ENCODE measurements at regions of chr16 and their contacts with region 1.

Region 1: DNA sequence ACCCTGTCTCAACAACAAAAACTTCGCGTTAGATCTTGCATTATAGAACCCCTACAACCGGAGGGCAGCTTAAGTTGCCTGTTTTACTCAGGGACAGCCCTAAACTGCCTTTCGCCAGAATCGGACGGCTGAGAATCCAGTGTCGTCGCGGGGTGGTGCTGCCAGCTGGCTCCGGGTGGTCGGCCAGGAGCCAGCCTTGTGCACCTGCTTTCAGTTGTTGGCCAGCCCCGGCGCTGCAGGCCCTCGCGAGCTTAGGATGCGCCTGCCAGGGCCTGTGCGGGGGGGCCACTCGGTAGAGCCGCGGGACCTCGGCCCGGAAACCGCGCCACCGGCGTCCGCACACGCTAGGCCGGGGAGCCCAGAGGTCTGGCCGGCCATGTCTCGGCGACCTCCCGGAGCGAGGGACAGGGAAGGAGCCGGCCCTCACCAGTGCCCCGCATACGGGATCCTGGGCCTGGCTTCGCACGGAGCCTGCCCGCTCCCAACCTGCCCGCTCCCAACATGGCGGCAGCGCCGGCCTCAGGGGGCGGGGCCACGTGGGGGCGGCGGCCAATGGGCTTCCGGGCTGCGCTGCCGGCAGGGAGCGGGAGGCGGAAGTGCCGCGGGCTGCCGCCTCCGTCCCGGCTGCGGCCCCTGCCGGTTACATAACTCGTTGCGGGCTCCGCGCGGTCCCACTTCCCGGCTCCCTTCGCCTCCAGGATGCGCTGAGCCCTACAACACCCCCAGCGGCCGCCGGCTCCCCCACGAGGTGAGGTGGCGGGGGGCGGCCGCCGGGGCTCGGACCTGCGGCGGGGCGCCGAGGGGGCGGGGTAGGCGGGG is 14.2 kb downstream of the NAA60 start:
- H3K4me3 ChIP-seq: peak overlapping the region; percentile 83
- H3K27ac ChIP-seq: peak overlapping the region; percentile 93
- H3K4me1 ChIP-seq: peaks cover 10% of the 10 kb centered on the region
- CTCF ChIP-seq: peak; percentile 28; the same call in 1 of the 2 replicates

Region 2: GRCh38 chr16:3443108-3444031 is 14.3 kb before region 1 on chr16 and contains the starts of genes NAA60 and ZNF597:
- CTCF ChIA-PET with region 1: interaction called, 3 read pairs
- POLR2A ChIA-PET with region 1: interaction called, 18 read pairs
- H3K4me3 ChIP-seq: peak within 1 kb of the TSS; percentile 61
- H3K27ac ChIP-seq: peak within 1 kb of the TSS; percentile 32; the same call in 1 of the 2 replicates
- H3K4me1 ChIP-seq: no peaks in the 10 kb centered on the region
- CTCF ChIP-seq: no peak; the same call in 1 of the 2 replicates

Region 3: DNA sequence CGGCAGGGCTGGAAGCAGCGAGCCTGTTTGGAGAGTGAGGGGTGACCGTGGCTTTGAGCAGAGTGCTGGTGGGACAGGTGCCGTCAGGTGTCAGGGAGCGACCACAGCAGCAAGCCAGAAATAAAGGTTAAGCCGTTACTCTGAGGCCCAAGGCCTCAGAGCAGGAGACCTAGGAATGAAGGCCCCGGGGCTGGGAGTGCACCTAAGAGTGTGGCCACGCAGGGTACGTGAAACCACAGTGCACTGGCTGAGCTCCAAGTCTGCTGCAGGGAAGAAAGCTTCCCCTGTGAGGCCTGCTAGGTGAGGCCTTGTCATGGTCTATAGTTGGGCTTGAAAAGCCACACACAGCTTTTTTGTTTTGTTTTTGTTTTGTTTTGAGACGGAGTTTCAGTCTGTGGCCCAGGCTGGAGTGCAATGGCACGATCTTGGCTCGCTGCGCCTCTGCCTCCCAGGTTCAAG is 51.9 kb after region 1 on chr16:
- CTCF ChIA-PET with region 1: no interaction called
- POLR2A ChIA-PET with region 1: no interaction called
- H3K4me3 ChIP-seq: no peak overlapping the region
- H3K27ac ChIP-seq: 0 out of 2 replicates have a peak overlapping the region, but pooled peaks have one; percentile 31
- H3K4me1 ChIP-seq: peaks cover 3% of the 10 kb centered on the region; the same call in 1 of the 2 replicates
- CTCF ChIP-seq: no peak

Region 4: DNA sequence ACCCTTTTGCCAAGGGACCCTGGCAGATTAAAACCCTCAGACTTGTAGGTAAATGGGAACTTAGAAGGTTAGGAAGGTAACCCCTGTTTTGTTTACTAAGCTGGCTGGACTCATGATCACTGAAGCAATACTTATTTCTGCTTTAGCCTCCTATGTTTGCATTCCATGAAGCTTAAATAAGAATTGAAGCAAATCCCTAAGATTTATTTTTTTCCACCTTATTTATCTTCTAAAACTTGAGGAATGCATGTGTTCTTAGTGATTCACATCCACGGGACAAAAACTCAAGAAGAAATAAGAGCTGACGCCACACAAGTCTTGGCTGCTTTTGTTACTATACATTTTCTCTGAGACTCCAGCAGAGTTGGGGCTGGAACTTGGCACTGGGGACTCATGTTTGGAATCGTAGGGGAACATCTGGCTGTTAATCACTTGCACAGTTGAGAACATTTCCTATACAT is 78.7 kb after region 1 on chr16:
- CTCF ChIA-PET with region 1: no interaction called
- POLR2A ChIA-PET with region 1: no interaction called
- H3K4me3 ChIP-seq: no peak overlapping the region
- H3K27ac ChIP-seq: no peak overlapping the region
- H3K4me1 ChIP-seq: no peaks in the 10 kb centered on the region
- CTCF ChIP-seq: no peak

Region 5: GRCh38 chr16:3625911-3626732 is 168.5 kb after region 1 on chr16:
- CTCF ChIA-PET with region 1: no interaction called
- POLR2A ChIA-PET with region 1: no interaction called
- H3K4me3 ChIP-seq: no peak overlapping the region
- H3K27ac ChIP-seq: no peak overlapping the region
- H3K4me1 ChIP-seq: peaks cover 5% of the 10 kb centered on the region; the same call in 1 of the 2 replicates
- CTCF ChIP-seq: no peak

Measured in HEK293 (cell line).